ENCODE measurements at regions of chr3 and their contacts with region 1.

Region 1: DNA sequence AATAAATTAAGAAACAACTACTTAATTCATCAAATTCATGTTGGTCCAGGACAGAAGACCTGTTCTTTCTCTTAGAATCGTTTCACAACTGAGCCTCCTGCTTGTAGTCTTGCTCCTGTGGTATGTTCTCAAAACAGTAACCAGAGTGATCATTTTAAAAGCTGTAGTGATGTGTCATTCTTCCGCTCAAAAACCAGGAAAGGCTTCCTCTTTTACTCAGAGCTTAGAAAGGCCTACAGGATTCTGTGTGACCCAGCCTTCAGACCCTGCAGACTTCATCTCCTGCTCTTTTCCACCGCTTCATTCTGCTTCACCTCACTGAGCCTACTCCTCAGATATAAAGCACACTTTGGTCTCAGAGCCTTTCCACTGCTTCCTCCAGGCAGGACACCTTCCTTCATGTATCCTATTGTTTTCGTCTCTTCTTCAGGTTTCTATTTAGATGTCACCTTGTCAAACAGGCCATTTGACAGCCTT is 22.7 kb downstream of the ST6GAL1 start:
- DNase-seq: peak; percentile 74
- H3K4me3 Mint-ChIP-seq: peak overlapping the region; percentile 63
- H3K27ac Mint-ChIP-seq: peak overlapping the region; percentile 85
- H3K4me1 Mint-ChIP-seq: peaks cover 64% of the 10 kb centered on the region
- H3K27me3 Mint-ChIP-seq: no peaks in the 10 kb centered on the region

Region 2: DNA sequence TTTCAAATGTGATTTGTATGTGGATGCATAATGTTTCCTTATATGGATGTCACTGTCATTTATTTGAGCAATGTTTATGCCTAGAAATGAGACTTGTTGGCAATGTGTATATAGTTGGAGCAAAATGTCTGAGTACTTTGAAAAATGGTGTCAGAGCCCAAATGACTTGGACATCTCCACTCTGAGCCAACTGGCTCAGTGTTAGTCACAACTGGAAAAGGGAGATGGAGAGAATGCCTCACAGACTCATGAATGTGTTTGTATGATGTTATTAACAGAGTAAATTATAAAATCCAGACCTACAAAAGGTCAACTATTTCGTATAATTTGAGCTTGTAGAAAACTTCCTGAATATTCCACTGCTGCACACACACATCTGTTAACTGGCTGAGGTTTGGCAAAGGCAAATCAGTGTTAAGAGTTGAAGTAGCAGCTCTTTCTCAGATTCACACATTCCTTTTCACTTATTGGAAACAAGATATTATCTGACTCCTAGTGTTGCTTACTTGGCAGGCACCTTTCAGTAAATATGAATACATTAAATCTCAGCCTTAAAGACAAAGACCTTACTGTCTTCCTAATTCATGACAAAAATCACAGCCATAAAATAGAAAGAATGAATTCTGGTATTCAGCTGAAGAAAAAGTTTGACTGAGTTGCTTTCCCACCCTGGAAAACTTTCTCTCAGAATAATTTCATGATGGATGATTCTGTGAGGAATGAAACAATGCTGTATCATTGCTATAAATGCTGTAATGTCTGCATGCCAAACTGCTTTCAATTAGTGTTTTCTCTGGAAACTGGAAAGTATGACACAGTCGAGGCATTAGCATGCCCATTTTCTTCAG is 83.6 kb before region 1 on chr3:
- intact Hi-C with region 1: loop called (anchors 5 kb)
- DNase-seq: peak; percentile 26
- H3K4me3 Mint-ChIP-seq: no peak overlapping the region
- H3K27ac Mint-ChIP-seq: peak overlapping the region; percentile 34
- H3K4me1 Mint-ChIP-seq: peaks cover 30% of the 10 kb centered on the region
- H3K27me3 Mint-ChIP-seq: no peaks in the 10 kb centered on the region

Region 3: DNA sequence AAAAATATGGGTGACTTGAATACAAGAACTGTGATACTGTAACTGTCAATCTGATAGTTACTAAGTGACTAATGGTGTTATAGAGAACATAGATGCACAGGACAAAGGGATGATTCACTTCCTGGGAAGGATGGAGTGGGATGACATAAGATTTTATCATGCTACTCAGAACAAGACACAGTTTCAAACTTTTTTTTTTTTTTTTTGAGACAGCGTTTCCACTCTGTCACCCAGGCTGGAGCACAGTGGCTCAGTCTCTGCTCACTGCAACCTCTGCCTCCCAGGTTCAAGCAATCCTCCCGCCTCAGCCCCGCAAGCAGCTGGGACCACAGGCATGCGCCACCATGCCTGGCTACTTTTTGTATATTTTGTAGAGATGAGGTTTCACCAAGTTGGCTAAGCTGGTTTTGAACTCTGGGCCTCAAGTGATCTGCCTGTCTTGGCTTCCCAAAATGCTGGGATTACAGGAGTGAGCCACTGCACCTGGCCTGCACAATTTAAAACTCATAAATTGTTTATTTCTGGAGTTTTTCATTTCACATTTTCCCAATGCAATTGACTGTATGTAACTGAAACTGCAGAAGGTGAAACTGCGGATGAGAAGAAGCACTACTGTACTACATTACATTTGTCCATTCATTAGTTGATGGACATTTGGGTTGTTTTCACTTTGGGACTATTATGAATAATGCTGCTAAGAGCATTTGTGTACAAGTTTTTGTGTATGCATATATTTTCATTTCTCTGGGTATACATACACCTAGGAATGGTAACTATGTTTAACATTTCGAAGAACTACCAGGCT is 70.0 kb before region 1 on chr3:
- intact Hi-C with region 1: loop called (anchors 1 kb)
- DNase-seq: peak; percentile 80
- H3K4me3 Mint-ChIP-seq: peak overlapping the region; percentile 52
- H3K27ac Mint-ChIP-seq: peak overlapping the region; percentile 89
- H3K4me1 Mint-ChIP-seq: peaks cover 53% of the 10 kb centered on the region
- H3K27me3 Mint-ChIP-seq: no peaks in the 10 kb centered on the region

Region 4: GRCh38 chr3:186985661-186986364 is 32.8 kb after region 1 on chr3:
- intact Hi-C with region 1: no loop called
- DNase-seq: no peak
- H3K4me3 Mint-ChIP-seq: no peak overlapping the region
- H3K27ac Mint-ChIP-seq: no peak overlapping the region
- H3K4me1 Mint-ChIP-seq: peaks cover 24% of the 10 kb centered on the region
- H3K27me3 Mint-ChIP-seq: no peaks in the 10 kb centered on the region

Region 5: GRCh38 chr3:187000711-187001151 is 47.7 kb after region 1 on chr3:
- intact Hi-C with region 1: loop called (anchors 1 kb)
- DNase-seq: peak; percentile 78
- H3K4me3 Mint-ChIP-seq: peak overlapping the region; percentile 63
- H3K27ac Mint-ChIP-seq: peak overlapping the region; percentile 87
- H3K4me1 Mint-ChIP-seq: peaks cover 56% of the 10 kb centered on the region
- H3K27me3 Mint-ChIP-seq: no peaks in the 10 kb centered on the region

Region 6: DNA sequence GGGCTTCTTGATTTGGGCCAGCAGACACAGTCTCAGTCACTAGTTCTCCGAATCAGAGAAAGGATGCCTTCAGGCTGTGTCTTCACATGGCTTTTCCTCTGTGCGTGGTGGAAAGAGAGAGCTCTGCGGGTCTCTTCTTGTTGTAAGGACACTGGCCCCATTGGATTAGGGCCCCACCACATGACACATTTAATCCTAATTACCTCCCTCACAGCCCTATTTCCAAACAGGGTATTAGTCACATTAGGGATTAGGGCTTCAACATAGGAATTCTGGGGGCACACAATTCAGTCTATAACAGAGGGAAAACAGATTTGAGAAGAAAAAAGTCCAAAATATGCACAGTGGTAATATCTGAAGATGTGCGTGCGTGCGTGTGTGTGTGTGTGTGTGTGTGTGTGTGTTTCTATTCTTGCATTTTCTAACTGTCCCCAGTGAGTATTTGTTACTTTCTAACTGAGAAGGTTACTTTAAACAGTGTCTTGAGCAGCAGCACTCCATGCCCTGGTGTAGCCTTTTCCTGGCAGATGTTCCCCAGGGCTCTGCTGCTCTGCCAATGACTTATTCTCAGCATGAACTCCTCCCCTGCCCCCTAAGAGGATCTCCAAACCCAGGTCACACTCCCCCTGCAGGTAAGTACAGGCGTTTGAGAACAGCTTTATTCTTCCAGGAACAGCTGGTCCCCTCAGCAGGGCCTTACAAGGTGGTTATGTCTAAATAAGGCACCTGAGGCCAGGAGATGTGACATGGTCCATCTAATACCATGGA is 113.4 kb after region 1 on chr3:
- intact Hi-C with region 1: loop called (anchors 5 kb)
- DNase-seq: peak; percentile 83
- H3K4me3 Mint-ChIP-seq: no peak overlapping the region
- H3K27ac Mint-ChIP-seq: peak overlapping the region; percentile 79
- H3K4me1 Mint-ChIP-seq: peaks cover 52% of the 10 kb centered on the region
- H3K27me3 Mint-ChIP-seq: no peaks in the 10 kb centered on the region